ENCODE measurements at regions of chr2 and their contacts with region 1.

Region 1: GRCh38 chr2:74648009-74648443 is at the start of gene M1AP:
- DNase-seq: no peak
- H3K4me3 ChIP-seq: peak within 1 kb of the TSS; percentile 18
- CTCF ChIP-seq: no peak

Region 2: DNA sequence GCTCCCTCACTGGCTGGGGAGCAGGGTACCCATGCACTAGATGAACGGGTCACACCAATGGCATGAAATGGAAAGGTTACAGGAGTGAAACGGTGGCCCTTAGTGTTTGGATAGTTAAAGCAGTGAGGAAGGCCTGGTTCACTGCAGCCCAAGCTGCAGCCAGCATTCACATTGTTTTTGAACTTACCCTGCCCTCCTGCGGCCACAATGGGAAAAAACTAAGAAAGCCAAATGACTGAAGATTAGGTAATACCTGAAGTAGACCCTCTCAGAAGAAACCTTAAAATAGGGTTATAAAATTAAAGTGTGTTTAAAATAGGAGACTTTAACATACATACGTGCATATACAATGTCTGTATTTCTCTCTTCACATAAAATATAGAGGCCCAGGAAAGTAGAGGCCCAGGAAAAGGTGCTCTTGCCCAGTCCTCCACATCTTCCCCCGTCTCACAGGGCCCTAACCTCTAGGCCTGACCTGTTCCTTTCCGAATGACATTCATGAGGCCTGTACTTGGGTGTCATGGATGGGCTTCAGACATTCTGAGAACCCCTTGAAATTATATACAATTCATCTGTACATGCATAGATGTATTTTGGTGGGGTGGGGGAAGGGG is 60.3 kb before region 1 on chr2:
- in situ Hi-C with region 1: loop called (anchors 5 kb)
- DNase-seq: peak; percentile 60
- H3K4me3 ChIP-seq: no peak overlapping the region
- CTCF ChIP-seq: peak; percentile 69